ENCODE measurements at regions of chr7 and their contacts with region 1.

Region 1: GRCh38 chr7:48088559-48089045 is 463 bp upstream of the UPP1 start:
- DNase-seq: peak; percentile 89 to 95
- ATAC-seq: peak; percentile 75 to 84 (median 80)
- H3K4me3 ChIP-seq: peak overlapping the region; percentile 83
- H3K27ac ChIP-seq: peak overlapping the region; percentile 88
- H3K4me1 ChIP-seq: peaks cover 5% of the 10 kb centered on the region
- H3K27me3 ChIP-seq: no peaks in the 10 kb centered on the region
- CTCF ChIP-seq: no peak

Region 2: GRCh38 chr7:47979145-47979831 is 109.3 kb before region 1 on chr7 and contains the start of gene HUS1:
- intact Hi-C with region 1: loop called (anchors 2 to 5 kb)
- DNase-seq: peak; percentile 93 to 96
- ATAC-seq: peak; percentile 99 to 100 (median 100)
- H3K4me3 ChIP-seq: peak within 1 kb of the TSS; percentile 91
- H3K27ac ChIP-seq: peak within 1 kb of the TSS; percentile 72
- H3K4me1 ChIP-seq: peaks cover 8% of the 10 kb centered on the region
- H3K27me3 ChIP-seq: no peaks in the 10 kb centered on the region
- CTCF ChIP-seq: no peak
- total RNA-seq, gene HUS1: 26.3 to 30.7 (median 27.3) TPM

Region 3: GRCh38 chr7:48035301-48035966 is 53.2 kb before region 1 on chr7 and contains the start of gene C7orf57:
- intact Hi-C with region 1: loop called (anchors 5 kb)
- DNase-seq: peak; percentile 92 to 95
- ATAC-seq: peak; percentile 100
- H3K4me3 ChIP-seq: peak within 1 kb of the TSS; percentile 74
- H3K27ac ChIP-seq: no peak within 1 kb of the TSS
- H3K4me1 ChIP-seq: peaks cover 11% of the 10 kb centered on the region
- H3K27me3 ChIP-seq: peaks cover 2 to 31% (median 8%) of the 10 kb centered on the region in 3 donors
- CTCF ChIP-seq: peak; percentile 13
- total RNA-seq, gene C7orf57: not detected

Region 4: DNA sequence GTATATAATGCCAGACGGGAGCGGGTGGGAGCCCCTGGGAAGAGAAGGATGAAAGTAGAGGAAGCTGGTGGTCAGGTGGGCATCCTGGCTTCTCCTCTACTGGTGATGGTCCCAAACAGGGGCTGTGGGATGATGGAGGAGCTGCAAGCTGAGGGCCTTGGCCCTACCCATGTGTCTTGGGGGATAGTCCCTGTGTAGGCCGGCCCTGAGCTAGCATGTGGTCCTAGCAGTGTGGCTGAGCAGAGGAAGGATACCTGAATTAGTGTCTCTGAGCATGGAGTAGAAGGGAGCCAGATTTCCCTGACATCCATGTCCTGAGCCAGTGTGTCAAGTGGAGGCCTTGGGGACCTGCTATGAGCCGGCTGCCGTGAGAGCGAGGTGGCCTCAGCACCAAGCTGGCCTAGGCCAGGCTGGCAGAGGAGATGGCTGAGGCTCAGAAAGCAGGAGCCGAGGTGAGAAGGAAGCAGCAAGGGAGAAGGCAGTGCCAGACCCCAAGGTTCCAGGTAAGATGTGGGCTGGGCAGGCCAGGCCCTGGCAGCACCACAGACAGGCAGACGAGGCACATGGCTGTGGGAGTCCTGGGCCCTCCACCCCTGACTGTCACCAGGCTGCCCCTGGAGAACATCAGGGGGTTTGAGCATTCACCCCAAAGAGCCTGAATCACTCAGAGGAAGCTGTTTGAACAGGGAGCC is 232.9 kb after region 1 on chr7:
- intact Hi-C with region 1: no loop called
- DNase-seq: no peak
- ATAC-seq: no peak
- H3K4me3 ChIP-seq: no peak overlapping the region
- H3K27ac ChIP-seq: no peak overlapping the region
- H3K4me1 ChIP-seq: no peaks in the 10 kb centered on the region
- H3K27me3 ChIP-seq: no peaks in the 10 kb centered on the region
- CTCF ChIP-seq: no peak

Measured in psoas muscle (tissue), 8 donors.